ENCODE measurements at regions of chr16 and their contacts with region 1.

Region 1: DNA sequence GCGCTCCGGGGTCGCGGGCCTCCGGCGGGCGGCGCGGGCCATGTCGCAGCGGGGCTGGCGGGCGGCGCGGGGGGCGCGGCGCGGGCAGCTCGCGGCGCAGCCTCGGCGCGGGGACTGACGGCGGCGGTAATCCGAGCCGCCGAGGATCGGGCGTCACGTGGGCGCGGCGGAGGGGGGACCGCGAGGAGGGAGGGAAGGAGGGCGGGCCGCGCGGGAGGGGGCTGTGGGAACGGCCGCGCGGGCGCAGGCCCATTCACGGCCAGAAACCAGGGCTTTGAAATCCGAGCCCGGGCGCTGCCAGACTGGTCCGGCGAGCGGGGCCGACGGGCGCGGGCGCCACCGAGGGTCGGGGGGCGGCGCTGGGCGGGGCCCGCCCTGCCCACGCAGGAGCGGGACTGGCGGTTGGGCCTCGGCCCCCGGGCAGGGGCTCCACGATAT is at the start of gene MTSS2:
- DNase-seq: peak; percentile 59
- H3K4me3 ChIP-seq: peak within 1 kb of the TSS; percentile 84 to 92 (median 88)
- H3K27ac ChIP-seq: peak within 1 kb of the TSS; percentile 26
- H3K4me1 ChIP-seq: peaks cover 57% of the 10 kb centered on the region
- H3K27me3 ChIP-seq: no peaks in the 10 kb centered on the region
- CTCF ChIP-seq: no peak
- total RNA-seq, gene MTSS2: 25.8 to 42.9 TPM

Region 2: GRCh38 chr16:70700101-70701020 is 14.4 kb after region 1 on chr16:
- CTCF ChIA-PET with region 1: no interaction called
- dilution Hi-C with region 1: no loop called
- in situ Hi-C with region 1: no loop called
- intact Hi-C with region 1: loop called (anchors 1 kb)
- DNase-seq: peak; percentile 84
- H3K4me3 ChIP-seq: no peak overlapping the region
- H3K27ac ChIP-seq: peak overlapping the region; percentile 68
- H3K4me1 ChIP-seq: peaks cover 81% of the 10 kb centered on the region
- H3K27me3 ChIP-seq: no peaks in the 10 kb centered on the region
- CTCF ChIP-seq: peak in 1 of 2 donors; percentile 14

Region 3: GRCh38 chr16:70715055-70715858 is 29.3 kb after region 1 on chr16:
- CTCF ChIA-PET with region 1: interaction called, 3 read pairs
- dilution Hi-C with region 1: no loop called
- in situ Hi-C with region 1: no loop called
- intact Hi-C with region 1: loop called (anchors 1 kb)
- DNase-seq: peak; percentile 99
- H3K4me3 ChIP-seq: no peak overlapping the region
- H3K27ac ChIP-seq: peak overlapping the region; percentile 67
- H3K4me1 ChIP-seq: peaks cover 34% of the 10 kb centered on the region
- H3K27me3 ChIP-seq: no peaks in the 10 kb centered on the region
- CTCF ChIP-seq: peak in 1 of 2 donors; percentile 43

Region 4: GRCh38 chr16:70730031-70730430 is 44.1 kb after region 1 on chr16:
- CTCF ChIA-PET with region 1: no interaction called
- dilution Hi-C with region 1: no loop called
- in situ Hi-C with region 1: loop called in 1 of 2 experiments (anchors 5 kb)
- intact Hi-C with region 1: no loop called
- DNase-seq: no peak
- H3K4me3 ChIP-seq: no peak overlapping the region
- H3K27ac ChIP-seq: no peak overlapping the region
- H3K4me1 ChIP-seq: peaks cover 17% of the 10 kb centered on the region
- H3K27me3 ChIP-seq: no peaks in the 10 kb centered on the region
- CTCF ChIP-seq: no peak

Region 5: DNA sequence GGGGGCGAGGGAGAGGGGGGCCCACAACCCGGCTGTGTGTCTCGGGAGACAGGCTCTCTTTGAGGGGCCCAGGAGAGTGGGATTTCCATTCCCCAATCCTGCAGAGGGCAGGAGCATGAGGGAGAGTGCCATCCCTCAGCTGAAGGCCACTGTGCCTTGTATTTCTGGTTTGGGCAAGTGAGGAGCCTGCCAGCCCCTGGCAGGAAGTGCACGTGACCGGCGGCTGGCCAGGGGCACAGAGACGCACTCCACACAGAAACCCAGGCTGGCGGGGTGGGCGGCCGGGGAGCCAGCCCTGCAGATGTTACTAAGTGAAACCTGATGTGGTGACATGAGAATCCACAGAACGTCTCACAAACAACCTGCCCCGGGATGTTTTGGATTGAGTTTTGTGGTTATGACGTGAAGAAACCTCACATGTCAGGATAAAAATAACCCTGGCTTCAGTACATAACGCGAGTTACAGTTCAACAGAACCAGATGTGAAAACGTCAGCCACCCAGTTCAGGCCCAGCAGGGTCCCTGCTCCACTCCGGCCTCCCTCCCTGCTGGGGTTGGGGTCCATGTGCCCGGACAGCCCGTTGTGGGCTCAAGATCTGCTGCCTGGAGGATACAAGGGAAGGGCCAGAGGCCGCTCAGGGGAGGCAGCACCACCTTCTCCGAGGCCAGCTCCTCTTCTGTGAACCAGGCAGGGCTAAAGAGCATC is 51.6 kb after region 1 on chr16:
- CTCF ChIA-PET with region 1: interaction called, 6 read pairs
- dilution Hi-C with region 1: no loop called
- in situ Hi-C with region 1: loop called in 1 of 2 experiments (anchors 5 kb)
- intact Hi-C with region 1: loop called (anchors 1 kb)
- DNase-seq: peak; percentile 67
- H3K4me3 ChIP-seq: no peak overlapping the region
- H3K27ac ChIP-seq: peak overlapping the region; percentile 6
- H3K4me1 ChIP-seq: peaks cover 31% of the 10 kb centered on the region
- H3K27me3 ChIP-seq: no peaks in the 10 kb centered on the region
- CTCF ChIP-seq: no peak

Region 6: DNA sequence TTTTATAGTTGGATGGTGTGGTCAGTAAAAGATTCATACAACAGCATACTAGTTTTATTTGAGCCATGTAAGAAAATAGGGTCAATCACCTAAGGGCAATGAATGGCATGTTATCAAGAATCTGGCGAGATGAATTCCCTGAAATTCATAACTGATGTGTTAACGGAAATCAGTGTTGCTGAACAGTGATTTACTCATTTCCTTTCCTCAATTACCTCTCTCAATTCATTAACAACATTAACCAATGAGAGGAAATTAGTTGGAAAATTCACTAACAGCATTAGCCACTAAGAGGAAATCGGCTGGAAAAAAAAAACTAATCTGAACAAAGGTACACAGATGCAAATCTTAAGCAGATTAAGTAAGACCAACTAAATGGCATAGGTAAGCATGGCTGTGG is 597.0 kb after region 1 on chr16:
- CTCF ChIA-PET with region 1: no interaction called
- dilution Hi-C with region 1: no loop called
- in situ Hi-C with region 1: no loop called
- intact Hi-C with region 1: no loop called
- DNase-seq: no peak
- H3K4me3 ChIP-seq: no peak overlapping the region
- H3K27ac ChIP-seq: no peak overlapping the region
- H3K4me1 ChIP-seq: no peaks in the 10 kb centered on the region
- H3K27me3 ChIP-seq: no peaks in the 10 kb centered on the region
- CTCF ChIP-seq: no peak

Region 7: GRCh38 chr16:71367241-71367976 is 681.5 kb after region 1 on chr16:
- CTCF ChIA-PET with region 1: no interaction called
- dilution Hi-C with region 1: no loop called
- in situ Hi-C with region 1: no loop called
- intact Hi-C with region 1: loop called (anchors 10 kb)
- DNase-seq: peak; percentile 25
- H3K4me3 ChIP-seq: no peak overlapping the region
- H3K27ac ChIP-seq: no peak overlapping the region
- H3K4me1 ChIP-seq: no peaks in the 10 kb centered on the region
- H3K27me3 ChIP-seq: no peaks in the 10 kb centered on the region
- CTCF ChIP-seq: peak; percentile 68 to 84

Measured in mammary epithelial cell (primary cell).